ENCODE measurements at regions of chr6 and their contacts with region 1.

Region 1: GRCh38 chr6:108800427-108800864 is 47.8 kb upstream of the ARMC2 start:
- DNase-seq: no peak
- CTCF ChIP-seq: no peak

Region 2: DNA sequence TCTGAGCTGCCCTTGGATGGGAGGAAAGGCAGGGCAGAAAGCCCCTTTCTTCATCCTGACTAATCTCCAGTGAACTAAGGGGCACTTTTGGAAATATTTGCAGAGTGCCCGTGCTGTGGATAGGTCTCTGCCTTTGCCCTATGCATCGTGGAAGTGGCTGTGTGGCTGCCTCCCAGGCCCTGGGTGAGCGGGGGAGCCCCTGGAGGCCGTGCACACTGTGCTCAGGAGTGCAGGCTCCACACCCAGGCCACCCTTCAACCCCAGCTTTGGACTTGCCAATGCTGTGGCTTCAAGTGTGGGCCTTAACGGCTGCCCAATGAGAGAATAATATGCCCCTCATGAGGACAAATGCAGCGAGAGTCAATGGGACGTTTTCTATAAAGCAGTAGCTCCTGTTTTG is 11.0 kb after region 1 on chr6:
- CTCF ChIA-PET with region 1: interaction called, 10 read pairs
- POLR2A ChIA-PET with region 1: no interaction called
- DNase-seq: no peak
- CTCF ChIP-seq: no peak

Region 3: GRCh38 chr6:108841377-108841855 is 41.0 kb after region 1 on chr6:
- CTCF ChIA-PET with region 1: no interaction called
- POLR2A ChIA-PET with region 1: no interaction called
- DNase-seq: no peak
- CTCF ChIP-seq: no peak

Measured in GM10248 (cell line).